Endothelial cell of umbilical vein (primary cell): ENCODE measurements at regions of chr15 and their contacts with region 1.

Region 1: GRCh38 chr15:85582131-85583079 is 202.0 kb downstream of the AKAP13 start:
- DNase-seq: peak; percentile 98
- H3K4me3 ChIP-seq: peak overlapping the region; percentile 20 to 55 (median 33)
- H3K27ac ChIP-seq: peak overlapping the region; percentile 91
- H3K4me1 ChIP-seq: peaks cover 67% of the 10 kb centered on the region
- H3K27me3 ChIP-seq: no peaks in the 10 kb centered on the region
- CTCF ChIP-seq: no peak
- POLR2A ChIP-seq: peak; percentile 78

Region 2: DNA sequence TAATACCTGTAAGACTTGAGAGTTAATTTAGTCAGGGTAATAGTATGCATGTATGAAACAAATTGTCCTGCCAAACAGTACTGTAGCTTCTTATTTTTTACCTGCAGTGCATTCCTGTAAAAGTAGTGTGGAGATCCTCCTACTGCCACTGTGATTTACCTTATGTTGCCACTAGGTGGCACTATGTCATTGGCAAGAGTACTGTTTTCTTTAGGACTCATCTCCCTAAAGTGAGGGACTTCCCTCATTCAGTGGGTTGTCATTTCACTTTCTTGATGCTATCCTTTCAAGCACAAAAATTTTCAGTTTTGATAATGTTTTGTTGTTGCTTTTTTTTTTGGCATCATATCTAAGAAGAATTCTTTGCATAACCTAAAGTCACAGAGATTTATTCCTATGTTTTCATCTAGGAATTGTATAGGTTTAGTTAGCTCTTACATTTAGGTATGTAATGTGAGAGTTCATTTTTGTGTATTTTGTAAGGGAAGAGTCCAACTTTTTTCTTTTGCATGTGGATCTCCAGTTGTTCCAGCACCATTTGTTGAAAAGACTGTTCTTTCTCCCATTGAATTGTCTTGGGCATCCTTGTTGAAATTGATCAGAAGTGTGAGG is 96.3 kb before region 1 on chr15:
- CTCF ChIA-PET with region 1: interaction called, 6 read pairs
- POLR2A ChIA-PET with region 1: no interaction called
- dilution Hi-C with region 1: no loop called
- intact Hi-C with region 1: loop called (anchors 5 kb)
- DNase-seq: peak; percentile 78
- H3K4me3 ChIP-seq: no peak overlapping the region
- H3K27ac ChIP-seq: no peak overlapping the region
- H3K4me1 ChIP-seq: peaks cover 4% of the 10 kb centered on the region
- H3K27me3 ChIP-seq: no peaks in the 10 kb centered on the region
- CTCF ChIP-seq: peak; percentile 58 to 69
- POLR2A ChIP-seq: no peak

Region 3: GRCh38 chr15:85527895-85528294 is 54.5 kb before region 1 on chr15:
- CTCF ChIA-PET with region 1: interaction called, 3 read pairs
- POLR2A ChIA-PET with region 1: no interaction called
- dilution Hi-C with region 1: no loop called
- intact Hi-C with region 1: loop called (anchors 1 kb)
- DNase-seq: peak; percentile 86
- H3K4me3 ChIP-seq: no peak overlapping the region
- H3K27ac ChIP-seq: peak overlapping the region; percentile 59
- H3K4me1 ChIP-seq: peaks cover 13% of the 10 kb centered on the region
- H3K27me3 ChIP-seq: no peaks in the 10 kb centered on the region
- CTCF ChIP-seq: no peak
- POLR2A ChIP-seq: no peak

Region 4: GRCh38 chr15:85543741-85544155 is 38.7 kb before region 1 on chr15:
- CTCF ChIA-PET with region 1: interaction called, 3 read pairs
- POLR2A ChIA-PET with region 1: no interaction called
- dilution Hi-C with region 1: no loop called
- intact Hi-C with region 1: loop called (anchors 5 kb)
- DNase-seq: peak; percentile 43
- H3K4me3 ChIP-seq: no peak overlapping the region
- H3K27ac ChIP-seq: no peak overlapping the region
- H3K4me1 ChIP-seq: peaks cover 6% of the 10 kb centered on the region
- H3K27me3 ChIP-seq: no peaks in the 10 kb centered on the region
- CTCF ChIP-seq: no peak
- POLR2A ChIP-seq: no peak

Region 5: GRCh38 chr15:85554852-85555521 is 27.4 kb before region 1 on chr15:
- CTCF ChIA-PET with region 1: no interaction called
- POLR2A ChIA-PET with region 1: no interaction called
- dilution Hi-C with region 1: no loop called
- intact Hi-C with region 1: no loop called
- DNase-seq: no peak
- H3K4me3 ChIP-seq: no peak overlapping the region
- H3K27ac ChIP-seq: no peak overlapping the region
- H3K4me1 ChIP-seq: no peaks in the 10 kb centered on the region
- H3K27me3 ChIP-seq: no peaks in the 10 kb centered on the region
- CTCF ChIP-seq: no peak
- POLR2A ChIP-seq: no peak

Region 6: GRCh38 chr15:85607842-85608241 is 25.4 kb after region 1 on chr15:
- CTCF ChIA-PET with region 1: interaction called, 8 read pairs
- POLR2A ChIA-PET with region 1: interaction called, 5 read pairs
- dilution Hi-C with region 1: no loop called
- intact Hi-C with region 1: loop called (anchors 1 kb)
- DNase-seq: peak; percentile 92
- H3K4me3 ChIP-seq: peak overlapping the region in 2 of 3 experiments; percentile 28 to 55
- H3K27ac ChIP-seq: peak overlapping the region; percentile 98
- H3K4me1 ChIP-seq: peaks cover 28% of the 10 kb centered on the region
- H3K27me3 ChIP-seq: no peaks in the 10 kb centered on the region
- CTCF ChIP-seq: no peak
- POLR2A ChIP-seq: no peak

Region 7: GRCh38 chr15:85707519-85708338 is 125.3 kb after region 1 on chr15:
- CTCF ChIA-PET with region 1: no interaction called
- POLR2A ChIA-PET with region 1: no interaction called
- dilution Hi-C with region 1: no loop called
- intact Hi-C with region 1: loop called (anchors 10 kb)
- DNase-seq: peak; percentile 88
- H3K4me3 ChIP-seq: peak overlapping the region in 2 of 3 experiments; percentile 5 to 51
- H3K27ac ChIP-seq: peak overlapping the region; percentile 92
- H3K4me1 ChIP-seq: peaks cover 18% of the 10 kb centered on the region
- H3K27me3 ChIP-seq: no peaks in the 10 kb centered on the region
- CTCF ChIP-seq: no peak
- POLR2A ChIP-seq: no peak